Endothelial cell of umbilical vein (primary cell): ENCODE measurements at regions of chr12 and their contacts with region 1.

Region 1: GRCh38 chr12:8655421-8655820 is 7.2 kb downstream of the MFAP5 start:
- DNase-seq: no peak
- H3K4me3 ChIP-seq: no peak overlapping the region
- H3K27ac ChIP-seq: no peak overlapping the region
- H3K4me1 ChIP-seq: no peaks in the 10 kb centered on the region
- H3K27me3 ChIP-seq: no peaks in the 10 kb centered on the region
- CTCF ChIP-seq: no peak
- POLR2A ChIP-seq: no peak

Region 2: DNA sequence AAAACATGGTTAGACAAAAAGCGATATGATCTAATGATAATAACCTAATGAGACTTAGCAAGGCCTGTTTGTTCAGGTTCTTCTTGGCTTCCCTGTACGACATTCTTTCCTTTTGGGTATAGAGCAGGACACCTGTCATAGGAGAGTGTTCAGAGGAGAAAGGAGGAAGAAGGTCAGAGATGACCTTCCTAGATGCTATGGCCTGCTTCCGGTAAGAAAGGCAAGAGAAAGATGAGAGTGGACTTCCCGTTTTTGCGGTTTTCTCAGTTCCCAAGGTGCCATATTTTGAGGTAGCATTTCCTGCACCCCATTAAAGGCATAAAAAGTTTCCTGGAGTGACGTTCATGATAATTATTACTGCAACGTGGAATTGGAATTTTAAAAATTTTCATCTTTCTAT is 123.4 kb before region 1 on chr12:
- CTCF ChIA-PET with region 1: no interaction called
- POLR2A ChIA-PET with region 1: no interaction called
- dilution Hi-C with region 1: no loop called
- intact Hi-C with region 1: no loop called
- DNase-seq: no peak
- H3K4me3 ChIP-seq: no peak overlapping the region
- H3K27ac ChIP-seq: no peak overlapping the region
- H3K4me1 ChIP-seq: no peaks in the 10 kb centered on the region
- H3K27me3 ChIP-seq: peaks cover 3 to 10% of the 10 kb centered on the region in 2 experiments
- CTCF ChIP-seq: no peak
- POLR2A ChIP-seq: no peak

Region 3: GRCh38 chr12:8823565-8824300 is 168.3 kb after region 1 on chr12:
- CTCF ChIA-PET with region 1: interaction called, 122 read pairs
- POLR2A ChIA-PET with region 1: interaction called, 8 read pairs
- dilution Hi-C with region 1: no loop called
- intact Hi-C with region 1: loop called (anchors 1 kb)
- DNase-seq: peak; percentile 53
- H3K4me3 ChIP-seq: no peak overlapping the region
- H3K27ac ChIP-seq: no peak overlapping the region
- H3K4me1 ChIP-seq: no peaks in the 10 kb centered on the region
- H3K27me3 ChIP-seq: peaks cover 1 to 3% of the 10 kb centered on the region in 2 experiments
- CTCF ChIP-seq: peak; percentile 62 to 65
- POLR2A ChIP-seq: no peak